Right lobe of liver (tissue), 6 donors: ENCODE measurements at regions of chr2 and their contacts with region 1.

Region 1: GRCh38 chr2:85888684-85889626 is at the start of gene ST3GAL5:
- DNase-seq: peak; percentile 94 to 95 (median 94)
- ATAC-seq: peak; percentile 77 to 85 (median 81)
- H3K4me3 ChIP-seq: peak within 1 kb of the TSS; percentile 66 to 84 (median 66)
- H3K27ac ChIP-seq: peak within 1 kb of the TSS; percentile 82 to 93 (median 85)
- H3K4me1 ChIP-seq: peaks cover 0 to 29% (median 2%) of the 10 kb centered on the region in 4 donors
- H3K27me3 ChIP-seq: no peaks in the 10 kb centered on the region
- CTCF ChIP-seq: peak; percentile 51 to 66 (median 56)
- POLR2A ChIP-seq: peak; percentile 53
- total RNA-seq, gene ST3GAL5: 8.6 to 22.2 (median 10.9) TPM

Region 2: DNA sequence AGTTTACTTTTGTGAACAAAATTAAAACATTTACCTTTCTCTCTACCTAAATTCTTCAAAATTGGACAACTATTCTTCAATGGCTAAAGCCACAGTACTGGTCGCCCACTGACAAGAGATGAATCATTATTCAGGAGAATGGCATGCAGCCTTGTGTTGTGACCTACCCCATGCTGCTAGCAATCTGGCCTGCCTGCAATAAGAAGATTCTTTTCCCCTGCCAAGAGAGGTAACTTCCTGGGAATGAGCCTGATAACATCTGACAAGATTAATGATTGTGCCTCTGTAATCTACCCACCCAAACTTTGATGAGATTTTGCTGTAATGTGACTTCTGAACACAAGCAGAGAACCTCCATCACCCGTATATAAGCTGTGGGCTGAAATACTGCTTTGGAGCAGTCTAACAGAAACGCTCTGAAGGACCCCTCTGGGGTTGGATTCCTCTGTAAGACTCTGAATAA is 46.8 kb after region 1 on chr2:
- intact Hi-C with region 1: loop called in 1 of 2 experiments (anchors 2 kb)
- DNase-seq: no peak
- ATAC-seq: peak in 1 of 4 donors; percentile 46
- H3K4me3 ChIP-seq: no peak overlapping the region
- H3K27ac ChIP-seq: peak overlapping the region; percentile 64 to 90 (median 79)
- H3K4me1 ChIP-seq: peaks cover 0 to 49% (median 14%) of the 10 kb centered on the region in 4 donors
- H3K27me3 ChIP-seq: no peaks in the 10 kb centered on the region
- CTCF ChIP-seq: no peak
- POLR2A ChIP-seq: no peak

Region 3: DNA sequence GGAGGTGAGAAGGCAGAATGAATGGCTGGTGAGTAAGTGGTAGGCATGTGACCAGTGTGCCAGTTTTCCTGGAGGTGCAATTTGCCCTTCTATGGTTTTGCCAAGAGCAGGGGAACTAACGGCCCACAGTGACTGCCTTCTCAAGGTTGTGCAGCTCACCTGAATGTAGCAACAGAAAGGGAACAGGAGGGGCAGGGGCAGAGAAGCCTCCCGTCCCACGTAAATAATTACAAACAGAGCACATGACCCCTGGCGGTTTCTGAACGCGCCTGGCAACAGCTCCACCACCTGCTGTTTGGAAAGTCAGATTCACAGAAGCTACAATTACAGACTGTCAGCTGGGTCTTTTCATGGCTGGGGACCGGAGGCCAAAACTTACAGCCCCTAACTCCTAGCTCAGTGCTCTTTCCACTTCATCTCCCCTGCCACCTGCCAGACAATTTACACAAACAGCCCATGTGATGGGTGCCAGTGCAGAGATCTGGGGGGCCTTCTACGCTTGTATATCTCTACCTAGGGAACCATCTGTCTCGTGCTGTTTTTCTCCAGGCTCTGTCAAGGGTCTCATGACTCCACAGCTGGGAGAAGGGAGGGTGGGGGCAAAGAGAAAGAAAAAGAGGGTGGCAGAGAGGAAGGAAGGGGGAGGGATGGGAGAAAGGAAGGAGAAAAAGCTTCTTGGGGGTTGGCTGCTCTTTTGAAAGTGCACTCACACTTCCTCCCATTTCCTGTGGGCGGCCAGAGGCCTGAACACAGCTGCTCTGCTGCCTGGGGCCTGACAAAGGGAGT is 147.1 kb after region 1 on chr2:
- intact Hi-C with region 1: loop called (anchors 5 to 10 kb)
- DNase-seq: peak; percentile 71 to 83 (median 78)
- ATAC-seq: peak; percentile 80 to 84 (median 84)
- H3K4me3 ChIP-seq: no peak overlapping the region
- H3K27ac ChIP-seq: peak overlapping the region; percentile 11 to 68 (median 63)
- H3K4me1 ChIP-seq: peaks cover 0 to 35% (median 11%) of the 10 kb centered on the region in 4 donors
- H3K27me3 ChIP-seq: no peaks in the 10 kb centered on the region
- CTCF ChIP-seq: peak; percentile 24 to 50 (median 48)
- POLR2A ChIP-seq: peak; percentile 40